Cardiac septum (tissue), 1 donor: ENCODE measurements at regions of chr20 and their contacts with region 1.

Region 1: DNA sequence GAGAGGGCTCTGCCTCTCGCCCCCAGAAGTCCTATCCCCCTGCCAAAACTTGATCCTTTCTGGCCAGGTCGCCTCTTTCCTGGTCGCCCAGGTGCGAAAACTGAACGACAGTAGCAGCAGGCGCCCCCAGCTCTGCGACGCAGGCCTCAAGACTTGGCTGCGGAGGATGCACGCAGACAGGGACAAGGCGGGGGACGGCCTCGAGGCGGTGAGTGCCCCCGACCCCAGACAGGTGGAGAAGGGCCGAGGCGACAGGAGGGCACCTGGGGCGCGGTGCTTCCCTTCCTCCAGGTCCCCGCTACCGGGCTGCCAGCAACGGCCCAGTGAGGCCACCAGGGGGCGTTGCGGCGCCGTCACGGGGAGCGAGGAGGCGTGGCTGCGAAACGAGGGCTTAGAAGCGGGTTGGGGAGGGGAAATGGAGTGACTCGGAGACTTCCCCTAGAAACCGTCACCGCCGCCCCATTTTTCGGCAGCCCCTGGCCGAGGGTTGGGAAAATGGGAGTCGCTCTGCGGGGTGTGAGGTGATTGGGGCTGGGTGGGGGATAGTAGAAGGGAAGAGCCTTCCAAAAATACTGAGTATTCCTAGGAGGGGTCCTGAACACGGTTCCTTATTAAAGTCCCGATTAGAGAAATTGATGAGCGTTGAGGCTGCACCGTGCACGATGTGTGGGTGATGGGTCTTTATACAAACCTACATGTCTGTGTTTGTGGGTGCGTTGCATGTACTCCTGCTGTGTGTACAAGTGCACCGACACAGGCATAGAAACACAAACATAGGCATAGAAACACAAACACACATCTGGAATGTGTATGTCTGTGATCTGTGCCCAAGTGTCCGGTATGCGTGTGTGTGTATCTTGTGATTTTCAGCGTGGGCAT is 44.6 kb downstream of the ARHGAP40 start:
- DNase-seq: peak; percentile 91

Region 2: DNA sequence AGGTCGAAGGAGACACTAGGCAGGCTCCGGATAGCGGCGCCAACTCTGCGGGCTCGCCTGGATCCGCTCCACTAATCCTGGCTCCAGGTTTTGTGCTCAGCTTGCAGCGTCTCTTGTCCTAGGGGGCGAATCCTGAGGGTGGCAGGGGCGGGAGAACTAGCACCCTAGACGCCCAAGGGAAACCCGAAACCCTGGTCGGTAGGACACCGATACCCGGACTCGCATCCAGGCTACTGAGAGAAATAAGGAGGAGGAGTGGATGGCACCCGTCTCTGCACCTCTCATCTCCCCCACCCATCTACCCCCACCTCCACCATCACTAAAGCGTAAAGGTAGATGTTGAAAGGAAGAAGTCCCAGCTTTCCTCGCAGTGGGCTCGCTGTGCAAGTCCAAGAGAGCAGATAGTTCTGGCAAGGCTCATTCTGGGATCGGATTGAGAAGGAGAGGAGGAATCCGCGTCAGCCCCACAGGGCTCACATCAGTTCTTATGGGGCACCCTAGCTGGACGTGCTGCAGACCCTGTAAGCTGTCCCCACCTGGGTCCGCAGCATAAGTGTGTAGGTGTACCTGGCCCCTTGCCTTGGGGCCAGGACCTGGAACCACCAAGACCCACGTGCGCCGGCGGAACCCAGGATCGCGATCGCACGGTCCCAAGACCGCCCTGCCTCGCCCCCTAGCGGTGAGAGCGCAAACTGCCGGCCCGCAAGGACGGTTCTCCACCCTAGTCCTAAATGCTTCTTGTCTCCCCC is 84.9 kb after region 1 on chr20:
- intact Hi-C with region 1: loop called (anchors 2 kb)
- DNase-seq: no peak

Region 3: GRCh38 chr20:38748097-38748860 is 102.1 kb after region 1 on chr20 and contains the start of gene ACTR5:
- intact Hi-C with region 1: loop called (anchors 1 kb)
- DNase-seq: peak; percentile 98
- total RNA-seq, gene ACTR5: 3.0 TPM